Left colon (tissue), 2 donors: ENCODE measurements at regions of chr20 and their contacts with region 1.

Region 1: DNA sequence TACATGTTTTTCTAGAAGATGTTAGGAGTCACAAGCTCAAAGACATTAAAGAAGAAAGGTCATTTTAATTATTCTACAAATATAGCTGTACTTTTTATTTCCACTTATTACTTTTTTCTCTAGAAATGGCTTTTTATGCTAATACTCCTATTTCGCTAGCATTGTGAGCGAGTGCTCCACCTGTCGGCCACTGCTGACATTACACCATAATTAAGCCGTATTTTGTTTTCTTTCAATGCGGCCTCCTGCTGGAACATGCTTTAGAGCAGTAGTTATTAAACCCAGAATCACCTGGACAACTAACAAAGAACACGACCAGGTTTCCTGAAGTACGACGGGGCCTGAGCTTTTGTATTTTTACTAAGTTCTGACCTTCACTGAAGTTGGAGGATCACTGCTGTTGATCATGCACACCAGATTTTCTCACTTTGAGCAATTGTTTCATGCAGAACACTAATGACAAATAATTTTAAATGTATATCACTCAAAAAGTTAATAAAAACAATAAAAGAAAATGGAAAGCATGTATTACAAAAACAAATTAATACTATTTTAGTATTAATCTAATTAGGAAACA is 74.1 kb upstream of the PAK5 start:
- DNase-seq: peak in 1 of 2 donors; percentile 48
- ATAC-seq: no peak

Region 2: DNA sequence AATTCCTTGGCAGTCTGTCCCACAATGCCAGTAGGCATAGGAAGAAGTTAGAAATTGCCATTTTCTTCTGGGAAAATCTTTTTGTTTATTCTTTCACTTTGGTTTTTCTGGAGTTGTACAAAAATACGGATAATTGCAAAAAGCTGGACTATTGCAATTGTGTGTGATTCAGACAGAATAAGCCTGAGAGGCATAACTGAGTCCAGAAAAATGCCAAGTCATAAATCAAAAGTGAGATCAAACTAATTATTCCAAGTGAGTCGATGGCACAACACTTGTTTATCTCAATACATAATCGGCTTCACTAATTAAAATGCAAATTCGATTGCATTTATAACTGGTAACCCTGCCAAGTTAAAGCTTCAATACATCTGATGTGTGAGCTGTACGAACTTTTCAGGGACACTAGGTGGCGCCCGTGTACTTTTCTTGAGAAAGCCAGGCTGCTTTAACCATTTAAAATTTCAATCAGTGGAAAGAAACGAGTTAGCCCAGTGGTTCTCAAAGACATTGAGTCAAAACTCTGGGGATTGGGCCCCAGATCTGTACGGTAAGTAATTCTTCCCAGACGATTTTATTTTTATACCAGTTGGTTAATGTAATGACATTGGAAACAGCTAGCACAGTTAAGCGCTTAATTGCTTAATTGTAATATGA is 296.0 kb before region 1 on chr20:
- intact Hi-C with region 1: loop called in 1 of 2 experiments (anchors 5 kb)
- DNase-seq: peak in 1 of 2 donors; percentile 74
- ATAC-seq: peak; percentile 82